ENCODE measurements at regions of chr1 and their contacts with region 1.

Region 1: GRCh38 chr1:184866991-184867788 is 107.1 kb downstream of the NIBAN1 start:
- DNase-seq: peak; percentile 73 to 86 (median 76)
- H3K4me3 ChIP-seq: no peak overlapping the region
- H3K4me3 Mint-ChIP-seq: peak overlapping the region; percentile 19 to 77 (median 58)
- H3K27ac ChIP-seq: peak overlapping the region; percentile 43
- H3K27ac Mint-ChIP-seq: peak overlapping the region; percentile 81 to 95 (median 90)
- H3K4me1 ChIP-seq: peaks cover 33% of the 10 kb centered on the region
- H3K4me1 Mint-ChIP-seq: peaks cover 32 to 50% (median 39%) of the 10 kb centered on the region in 4 donors
- H3K27me3 ChIP-seq: no peaks in the 10 kb centered on the region
- H3K27me3 Mint-ChIP-seq: peaks cover 0 to 2% of the 10 kb centered on the region in 2 donors

Region 2: GRCh38 chr1:184724843-184725242 is 142.3 kb before region 1 on chr1:
- CTCF ChIA-PET with region 1: no interaction called
- POLR2A ChIA-PET with region 1: no interaction called
- intact Hi-C with region 1: no loop called
- DNase-seq: no peak
- H3K4me3 ChIP-seq: no peak overlapping the region
- H3K4me3 Mint-ChIP-seq: no peak overlapping the region
- H3K27ac ChIP-seq: no peak overlapping the region
- H3K27ac Mint-ChIP-seq: peak overlapping the region in 2 of 7 donors; percentile 10 to 29
- H3K4me1 ChIP-seq: no peaks in the 10 kb centered on the region
- H3K4me1 Mint-ChIP-seq: peaks cover 0 to 9% (median 0%) of the 10 kb centered on the region in 4 donors
- H3K27me3 ChIP-seq: no peaks in the 10 kb centered on the region
- H3K27me3 Mint-ChIP-seq: no peaks in the 10 kb centered on the region

Region 3: DNA sequence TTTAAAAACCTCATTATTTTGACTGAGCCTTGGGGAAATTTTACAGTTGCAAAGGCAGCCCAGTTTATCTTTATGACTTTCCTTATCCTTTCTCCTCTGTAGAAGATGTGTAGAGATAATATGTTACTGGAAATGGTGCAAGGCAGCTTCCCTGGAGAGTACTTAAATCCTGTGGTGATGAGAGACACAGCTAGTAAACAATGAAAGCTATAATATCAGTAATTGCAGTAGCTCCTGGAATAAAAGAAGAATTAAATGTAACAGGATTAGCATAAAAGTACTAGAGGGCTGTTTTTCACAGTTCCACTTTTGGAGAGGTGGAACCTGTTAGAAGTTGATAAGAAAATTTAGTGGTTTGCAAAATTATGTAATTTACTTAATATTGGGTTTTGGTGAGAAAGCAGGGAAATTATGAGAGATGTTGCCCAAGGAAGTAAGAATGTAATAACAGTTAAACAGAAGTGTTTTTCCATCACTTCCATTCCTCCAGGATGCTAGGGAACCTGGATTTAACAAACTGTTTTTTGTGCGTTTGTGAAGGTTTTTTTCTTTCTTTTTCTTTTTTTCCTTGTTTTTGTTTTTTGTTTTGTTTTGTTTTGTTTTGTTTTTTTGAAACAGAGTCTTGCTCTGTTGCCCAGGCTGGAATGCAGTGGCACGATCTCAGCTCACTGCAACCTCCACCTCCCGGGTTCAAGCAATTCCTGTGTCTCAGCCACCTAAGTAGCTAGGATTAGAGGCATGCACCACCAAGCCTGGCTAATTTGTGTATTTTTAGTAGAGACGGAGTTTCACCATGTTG is 96.8 kb before region 1 on chr1:
- CTCF ChIA-PET with region 1: no interaction called
- POLR2A ChIA-PET with region 1: no interaction called
- intact Hi-C with region 1: no loop called
- DNase-seq: no peak
- H3K4me3 ChIP-seq: no peak overlapping the region
- H3K4me3 Mint-ChIP-seq: no peak overlapping the region
- H3K27ac ChIP-seq: no peak overlapping the region
- H3K27ac Mint-ChIP-seq: no peak overlapping the region
- H3K4me1 ChIP-seq: no peaks in the 10 kb centered on the region
- H3K4me1 Mint-ChIP-seq: peaks cover 0 to 2% (median 0%) of the 10 kb centered on the region in 4 donors
- H3K27me3 ChIP-seq: no peaks in the 10 kb centered on the region
- H3K27me3 Mint-ChIP-seq: peaks cover 0 to 1% of the 10 kb centered on the region in 2 donors

Region 4: DNA sequence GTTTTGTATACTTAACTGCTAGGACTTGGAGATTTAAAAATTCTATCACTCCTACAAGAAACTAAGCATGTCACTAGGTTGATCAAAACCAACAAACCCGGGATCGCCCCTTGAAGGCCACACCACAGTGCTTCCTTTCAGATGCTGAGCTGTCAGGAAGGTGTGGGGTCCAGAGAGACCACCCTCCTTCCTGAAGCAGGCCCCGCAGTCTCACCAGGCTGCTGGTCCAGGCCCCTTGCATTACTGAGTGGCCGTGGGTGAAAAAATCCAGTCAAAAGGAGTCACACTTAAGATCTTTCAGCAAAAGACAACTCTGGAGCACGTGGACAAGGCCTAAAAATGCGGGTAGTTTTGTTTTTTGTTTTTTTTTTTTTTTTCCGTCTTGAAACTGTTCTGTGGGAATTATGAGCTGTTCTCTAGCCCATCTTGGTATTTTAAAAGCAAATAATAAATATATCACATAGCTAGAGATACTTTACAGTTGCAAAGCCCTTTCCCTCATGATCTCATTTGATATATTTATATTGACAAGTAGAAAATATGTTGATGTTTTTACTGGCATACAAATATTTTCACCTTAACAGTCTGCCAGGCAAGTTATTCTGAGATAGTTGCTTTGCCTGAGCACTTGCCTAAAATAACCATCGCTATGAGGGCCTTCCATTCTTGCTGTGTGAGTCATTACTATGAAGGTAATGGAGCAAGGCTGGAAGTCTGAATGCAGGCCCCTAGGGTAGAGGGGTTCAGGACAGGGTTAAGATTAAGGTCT is 39.4 kb before region 1 on chr1:
- CTCF ChIA-PET with region 1: interaction called, 5 read pairs
- POLR2A ChIA-PET with region 1: interaction called, 3 read pairs
- intact Hi-C with region 1: loop called (anchors 5 kb)
- DNase-seq: no peak
- H3K4me3 ChIP-seq: no peak overlapping the region
- H3K4me3 Mint-ChIP-seq: no peak overlapping the region
- H3K27ac ChIP-seq: no peak overlapping the region
- H3K27ac Mint-ChIP-seq: no peak overlapping the region
- H3K4me1 ChIP-seq: no peaks in the 10 kb centered on the region
- H3K4me1 Mint-ChIP-seq: peaks cover 0 to 3% (median 1%) of the 10 kb centered on the region in 4 donors
- H3K27me3 ChIP-seq: no peaks in the 10 kb centered on the region
- H3K27me3 Mint-ChIP-seq: no peaks in the 10 kb centered on the region

Region 5: DNA sequence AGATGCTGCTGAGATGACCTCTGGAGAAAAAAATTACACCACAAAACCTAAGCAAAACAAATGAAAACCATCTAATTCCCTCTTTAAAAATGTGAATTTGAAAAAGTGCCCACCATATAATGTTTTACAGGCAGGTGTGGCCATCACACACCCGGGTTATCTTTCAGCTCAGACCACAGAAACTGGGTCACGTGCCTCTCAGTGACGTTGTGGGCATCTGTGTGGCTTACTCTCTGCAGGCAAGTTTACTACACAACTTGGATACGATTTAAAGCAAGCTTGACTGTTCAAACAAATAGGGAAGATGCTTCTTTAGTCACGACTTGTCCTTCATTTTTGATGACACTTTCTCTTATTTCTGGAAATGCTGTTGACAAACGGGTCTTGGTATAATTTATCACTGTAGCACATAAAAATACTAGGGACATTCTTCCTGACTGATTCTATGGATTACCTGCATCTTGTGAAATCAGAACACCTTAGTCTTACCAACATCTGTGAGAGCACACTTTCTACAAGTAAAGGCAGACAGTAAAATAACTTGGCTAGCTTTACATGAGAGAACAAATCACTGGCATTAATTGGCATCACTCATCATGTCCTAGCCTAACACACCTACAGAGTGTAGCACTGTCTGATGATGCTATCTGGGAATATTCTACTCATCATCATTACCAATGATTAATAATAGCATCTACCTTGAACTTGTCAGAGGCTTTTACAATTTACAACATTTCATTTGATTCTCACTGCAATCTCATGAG is 23.3 kb before region 1 on chr1:
- CTCF ChIA-PET with region 1: interaction called, 4 read pairs
- POLR2A ChIA-PET with region 1: interaction called, 19 read pairs
- intact Hi-C with region 1: loop called (anchors 1 kb)
- DNase-seq: peak; percentile 69 to 85 (median 75)
- H3K4me3 ChIP-seq: no peak overlapping the region
- H3K4me3 Mint-ChIP-seq: peak overlapping the region in 7 of 8 donors; percentile 7 to 82 (median 28)
- H3K27ac ChIP-seq: peak overlapping the region; percentile 24
- H3K27ac Mint-ChIP-seq: peak overlapping the region; percentile 78 to 98 (median 90)
- H3K4me1 ChIP-seq: peaks cover 54% of the 10 kb centered on the region
- H3K4me1 Mint-ChIP-seq: peaks cover 35 to 49% (median 40%) of the 10 kb centered on the region in 4 donors
- H3K27me3 ChIP-seq: no peaks in the 10 kb centered on the region
- H3K27me3 Mint-ChIP-seq: no peaks in the 10 kb centered on the region

Region 6: DNA sequence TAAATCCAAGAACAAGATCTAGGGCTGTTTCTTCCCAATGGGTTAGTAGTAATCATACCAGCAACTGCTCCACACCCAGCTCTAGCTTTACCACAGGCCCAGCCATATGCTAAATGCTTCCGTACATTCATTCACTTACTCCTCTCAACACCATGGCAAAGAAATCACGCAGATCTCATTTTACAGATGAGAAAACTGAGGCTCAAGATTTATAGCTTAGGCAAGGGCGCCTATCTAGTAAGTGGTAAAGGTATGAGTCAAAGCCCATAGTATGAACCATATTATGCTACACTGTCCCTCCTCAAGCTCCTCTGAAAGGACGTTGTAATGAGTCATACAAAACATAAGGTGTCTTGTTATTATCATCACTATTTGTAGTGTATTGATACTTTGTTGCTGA is 24.9 kb after region 1 on chr1:
- CTCF ChIA-PET with region 1: interaction called, 3 read pairs
- POLR2A ChIA-PET with region 1: interaction called, 38 read pairs
- intact Hi-C with region 1: loop called (anchors 1 kb)
- DNase-seq: peak; percentile 19 to 39 (median 29)
- H3K4me3 ChIP-seq: no peak overlapping the region
- H3K4me3 Mint-ChIP-seq: peak overlapping the region in 7 of 8 donors; percentile 49 to 71 (median 59)
- H3K27ac ChIP-seq: peak overlapping the region; percentile 52
- H3K27ac Mint-ChIP-seq: peak overlapping the region; percentile 74 to 95 (median 90)
- H3K4me1 ChIP-seq: peaks cover 64% of the 10 kb centered on the region
- H3K4me1 Mint-ChIP-seq: peaks cover 42 to 74% (median 58%) of the 10 kb centered on the region in 4 donors
- H3K27me3 ChIP-seq: no peaks in the 10 kb centered on the region
- H3K27me3 Mint-ChIP-seq: no peaks in the 10 kb centered on the region